ENCODE measurements at regions of chr10 and their contacts with region 1.

Region 1: GRCh38 chr10:117496616-117497028 is 45.9 kb upstream of the EMX2 start:
- DNase-seq: peak; percentile 67 to 81 (median 72)
- ATAC-seq: peak; percentile 97
- H3K4me3 ChIP-seq: no peak overlapping the region
- H3K27ac ChIP-seq: no peak overlapping the region
- H3K4me1 ChIP-seq: no peaks in the 10 kb centered on the region; a peak in 2 of 5 replicates
- H3K27me3 ChIP-seq: peaks cover under 1 to 33% of the 10 kb centered on the region in 2 experiments; a peak in 4 of 5 replicates
- CTCF ChIP-seq: peak; percentile 84 to 90 (median 88)
- EP300 ChIP-seq: no peak
- POLR2A ChIP-seq: no peak
- RAD21 ChIP-seq: peak; percentile 82 to 88

Region 2: DNA sequence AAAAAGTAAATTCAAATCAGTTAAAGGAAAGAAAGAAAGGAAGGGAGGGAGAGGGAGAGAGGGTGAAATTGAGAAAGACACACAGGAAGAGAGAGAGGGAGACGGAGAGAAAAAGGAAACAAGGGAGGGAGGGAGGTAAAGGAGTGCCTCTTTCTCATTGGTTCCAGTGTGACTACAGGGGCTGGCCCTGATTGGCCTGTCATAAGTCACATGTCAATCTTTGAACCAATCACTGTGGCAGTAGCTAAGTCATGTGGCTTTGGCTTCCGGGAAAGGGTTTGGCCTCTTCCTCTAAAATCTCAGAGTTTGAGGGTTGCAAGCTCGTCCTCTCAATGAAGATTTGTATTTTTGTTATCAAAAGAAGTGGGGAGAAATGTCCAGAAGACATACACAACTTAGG is 399.9 kb after region 1 on chr10:
- CTCF ChIA-PET with region 1: no interaction called
- POLR2A ChIA-PET with region 1: no interaction called
- in situ Hi-C with region 1: no loop called
- intact Hi-C with region 1: no loop called
- DNase-seq: peak; percentile 6 to 43 (median 32)
- ATAC-seq: peak; percentile 64; the same call in 2 of the 3 replicates
- H3K4me3 ChIP-seq: no peak overlapping the region
- H3K27ac ChIP-seq: no peak overlapping the region
- H3K4me1 ChIP-seq: no peaks in the 10 kb centered on the region
- H3K27me3 ChIP-seq: no peaks in the 10 kb centered on the region
- CTCF ChIP-seq: no peak
- EP300 ChIP-seq: no peak
- POLR2A ChIP-seq: no peak
- RAD21 ChIP-seq: no peak

Region 3: DNA sequence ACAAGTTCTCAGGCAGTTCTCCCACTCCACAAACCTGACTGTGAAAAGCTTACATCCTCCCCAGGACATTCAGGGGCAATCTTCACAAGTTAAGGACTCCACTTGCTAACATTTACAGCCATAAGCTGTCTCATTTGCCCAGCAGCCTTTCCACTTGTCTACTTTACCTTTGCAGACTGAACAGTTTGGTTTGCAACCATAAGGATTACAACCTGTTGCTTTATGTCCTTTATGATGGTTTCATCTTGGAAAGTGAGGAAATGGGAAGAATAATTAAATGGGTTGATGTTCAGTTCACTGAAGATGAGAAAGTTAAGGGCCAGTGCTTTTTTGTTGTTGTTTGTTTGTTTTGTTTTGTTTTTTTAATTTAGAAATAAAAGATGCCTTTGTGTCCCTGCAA is 753.1 kb after region 1 on chr10:
- CTCF ChIA-PET with region 1: interaction called, 3 read pairs
- POLR2A ChIA-PET with region 1: no interaction called
- in situ Hi-C with region 1: no loop called
- intact Hi-C with region 1: loop called (anchors 2 kb)
- DNase-seq: no peak
- ATAC-seq: no peak
- H3K4me3 ChIP-seq: no peak overlapping the region
- H3K27ac ChIP-seq: no peak overlapping the region
- H3K4me1 ChIP-seq: no peaks in the 10 kb centered on the region
- H3K27me3 ChIP-seq: peaks cover 6 to 28% of the 10 kb centered on the region in 2 experiments; a peak in 3 of 5 replicates
- CTCF ChIP-seq: no peak
- EP300 ChIP-seq: no peak
- POLR2A ChIP-seq: no peak
- RAD21 ChIP-seq: no peak